Activated T-helper 1 cell treated with anti-CD3 and anti-CD28 coated beads, Interleukin-12 subunit alpha, Interleukin-12 subunit beta, Interleukin-2, Interleukin-4 antibody, amounts not matched to agents 30 ng/mL and 10 ng/mL and 1 ng/mL, durations not matched to agents 14 hours and 24 hours and 36 hours (primary cell): ENCODE measurements at regions of chr10 and their contacts with region 1.

Region 1: GRCh38 chr10:132185601-132186487 is 904 bp upstream of the DPYSL4 start:
- DNase-seq: peak; percentile 68
- H3K4me3 Mint-ChIP-seq: peak overlapping the region; percentile 71
- H3K27ac Mint-ChIP-seq: no peak overlapping the region
- H3K4me1 Mint-ChIP-seq: no peaks in the 10 kb centered on the region
- H3K27me3 Mint-ChIP-seq: peaks cover 31% of the 10 kb centered on the region

Region 2: GRCh38 chr10:132133005-132133404 is 52.8 kb before region 1 on chr10:
- intact Hi-C with region 1: no loop called
- DNase-seq: no peak
- H3K4me3 Mint-ChIP-seq: no peak overlapping the region
- H3K27ac Mint-ChIP-seq: no peak overlapping the region
- H3K4me1 Mint-ChIP-seq: no peaks in the 10 kb centered on the region
- H3K27me3 Mint-ChIP-seq: peaks cover 3% of the 10 kb centered on the region

Region 3: DNA sequence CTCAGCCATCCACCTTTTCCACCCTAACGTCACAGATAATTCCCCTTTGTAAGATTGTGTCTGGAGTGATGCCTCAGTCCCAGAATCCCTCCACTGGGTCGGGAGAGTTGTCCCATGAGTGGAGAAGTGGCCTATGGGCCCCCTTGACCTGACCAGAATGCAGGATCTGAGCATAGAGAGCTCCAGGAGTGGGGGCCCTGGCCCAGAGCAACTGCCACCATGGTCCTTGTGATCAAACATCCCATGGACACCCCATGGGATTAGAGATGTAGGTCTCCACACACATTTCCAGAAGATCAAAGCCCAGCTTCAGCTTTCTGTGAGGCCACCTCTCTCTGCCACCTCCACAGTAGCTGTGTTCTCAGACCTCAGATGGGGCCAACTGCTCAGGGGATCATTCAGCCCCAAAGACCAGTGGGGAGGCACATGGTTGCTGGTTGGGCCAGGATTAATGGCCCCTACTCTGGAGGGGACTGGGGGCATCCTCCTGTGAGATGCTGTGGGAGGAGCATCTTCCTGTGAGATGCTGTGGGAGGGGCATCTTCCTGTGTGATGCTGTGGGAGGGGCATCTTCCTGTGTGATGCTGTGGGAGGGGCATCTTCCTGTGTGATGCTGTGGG is 27.6 kb before region 1 on chr10:
- intact Hi-C with region 1: loop called (anchors 1 kb)
- DNase-seq: peak; percentile 40
- H3K4me3 Mint-ChIP-seq: no peak overlapping the region
- H3K27ac Mint-ChIP-seq: peak overlapping the region; percentile 83
- H3K4me1 Mint-ChIP-seq: peaks cover 28% of the 10 kb centered on the region
- H3K27me3 Mint-ChIP-seq: peaks cover 2% of the 10 kb centered on the region

Region 4: GRCh38 chr10:132163278-132163765 is 22.5 kb before region 1 on chr10:
- intact Hi-C with region 1: loop called (anchors 1 kb)
- DNase-seq: peak; percentile 56
- H3K4me3 Mint-ChIP-seq: no peak overlapping the region
- H3K27ac Mint-ChIP-seq: peak overlapping the region; percentile 74
- H3K4me1 Mint-ChIP-seq: peaks cover 41% of the 10 kb centered on the region
- H3K27me3 Mint-ChIP-seq: no peaks in the 10 kb centered on the region

Region 5: GRCh38 chr10:133373104-133373624 is 1187.3 kb after region 1 on chr10 and contains the start of gene ECHS1:
- intact Hi-C with region 1: loop called (anchors 10 kb)
- DNase-seq: peak; percentile 95
- H3K4me3 Mint-ChIP-seq: peak within 1 kb of the TSS; percentile 91
- H3K27ac Mint-ChIP-seq: peak within 1 kb of the TSS; percentile 84
- H3K4me1 Mint-ChIP-seq: peaks cover 5% of the 10 kb centered on the region
- H3K27me3 Mint-ChIP-seq: peaks cover 16% of the 10 kb centered on the region
- total RNA-seq, gene ECHS1: 69.3 and 69.6 TPM in 2 replicates